PC-9 (cell line): ENCODE measurements at regions of chr14 and their contacts with region 1.

Region 1: GRCh38 chr14:76812211-76813044 is at the start of gene ANGEL1:
- DNase-seq: peak; percentile 85 to 100
- H3K4me3 ChIP-seq: peak within 1 kb of the TSS; percentile 74
- H3K27ac ChIP-seq: no peak within 1 kb of the TSS
- H3K4me1 ChIP-seq: peaks cover 14% of the 10 kb centered on the region
- H3K27me3 ChIP-seq: peaks cover 17% of the 10 kb centered on the region
- CTCF ChIP-seq: no peak
- total RNA-seq, gene ANGEL1: 31.7 and 44.0 TPM in 2 replicates

Region 2: GRCh38 chr14:76773188-76773885 is 39.1 kb before region 1 on chr14:
- CTCF ChIA-PET with region 1: no interaction called
- POLR2A ChIA-PET with region 1: no interaction called
- intact Hi-C with region 1: loop called (anchors 1 kb)
- DNase-seq: peak; percentile 84 to 96
- H3K4me3 ChIP-seq: no peak overlapping the region
- H3K27ac ChIP-seq: no peak overlapping the region
- H3K4me1 ChIP-seq: peaks cover 17% of the 10 kb centered on the region
- H3K27me3 ChIP-seq: peaks cover 40% of the 10 kb centered on the region
- CTCF ChIP-seq: no peak

Region 3: DNA sequence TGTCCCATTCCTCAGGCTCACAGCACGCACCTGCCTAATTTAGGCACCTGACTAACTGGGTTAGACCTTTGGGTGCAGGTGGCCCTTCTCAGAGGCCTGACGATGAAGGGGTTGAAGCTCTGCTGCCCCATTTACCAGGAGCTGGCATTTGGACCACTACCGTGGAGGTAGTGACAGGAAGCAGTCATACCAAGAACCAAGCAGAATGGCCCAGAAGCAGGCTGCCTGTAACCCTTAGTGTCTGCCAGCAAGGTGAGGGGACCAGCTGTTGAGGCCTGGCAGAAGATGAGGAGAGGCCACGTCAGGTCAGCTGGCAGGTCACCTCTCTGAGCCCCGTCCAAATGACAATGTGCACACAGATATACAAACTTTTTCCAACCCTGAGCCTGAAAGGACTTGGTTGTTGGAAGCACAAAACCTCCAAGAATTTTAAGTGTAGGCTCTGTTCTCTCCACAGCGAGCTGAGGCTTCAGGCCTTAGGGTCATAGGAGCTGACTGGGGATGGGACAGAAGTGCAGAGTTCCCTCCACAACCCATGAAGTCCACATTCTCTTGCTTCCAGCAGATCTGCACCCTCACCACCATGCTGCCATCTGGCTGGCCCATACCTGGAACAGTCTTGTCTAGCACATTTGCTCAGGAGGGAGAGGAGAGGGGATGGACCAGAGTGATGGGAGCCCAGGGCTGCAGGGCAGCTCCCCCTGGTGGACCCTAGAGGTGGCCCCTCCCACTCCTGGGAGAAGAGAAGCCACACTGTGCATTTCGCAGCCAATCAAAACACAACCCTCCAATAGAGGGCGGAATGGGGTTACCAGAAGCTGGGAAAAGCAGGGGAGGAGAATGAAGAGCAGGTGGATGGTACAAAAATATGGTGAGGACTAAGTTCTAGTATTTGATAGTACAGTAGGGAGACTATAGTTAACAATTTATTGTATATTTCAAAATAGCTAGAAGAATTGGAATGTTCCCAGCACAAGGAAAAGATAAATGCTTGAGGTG is 27.9 kb before region 1 on chr14:
- CTCF ChIA-PET with region 1: interaction called, 11 read pairs
- POLR2A ChIA-PET with region 1: no interaction called
- intact Hi-C with region 1: no loop called
- DNase-seq: peak; percentile 65 to 80
- H3K4me3 ChIP-seq: no peak overlapping the region
- H3K27ac ChIP-seq: no peak overlapping the region
- H3K4me1 ChIP-seq: no peaks in the 10 kb centered on the region
- H3K27me3 ChIP-seq: no peaks in the 10 kb centered on the region
- CTCF ChIP-seq: peak; percentile 83

Region 4: GRCh38 chr14:76836029-76836630 is 23.7 kb after region 1 on chr14:
- CTCF ChIA-PET with region 1: no interaction called
- POLR2A ChIA-PET with region 1: no interaction called
- intact Hi-C with region 1: no loop called
- DNase-seq: peak in 1 of 2 experiments; percentile 21
- H3K4me3 ChIP-seq: no peak overlapping the region
- H3K27ac ChIP-seq: no peak overlapping the region
- H3K4me1 ChIP-seq: no peaks in the 10 kb centered on the region
- H3K27me3 ChIP-seq: peaks cover 91% of the 10 kb centered on the region
- CTCF ChIP-seq: no peak

Region 5: GRCh38 chr14:76855066-76855465 is 42.6 kb after region 1 on chr14:
- CTCF ChIA-PET with region 1: no interaction called
- POLR2A ChIA-PET with region 1: no interaction called
- intact Hi-C with region 1: no loop called
- DNase-seq: no peak
- H3K4me3 ChIP-seq: no peak overlapping the region
- H3K27ac ChIP-seq: no peak overlapping the region
- H3K4me1 ChIP-seq: no peaks in the 10 kb centered on the region
- H3K27me3 ChIP-seq: peaks cover 89% of the 10 kb centered on the region
- CTCF ChIP-seq: no peak